A549 (cell line): ENCODE measurements at regions of chr3 and their contacts with region 1.

Region 1: DNA sequence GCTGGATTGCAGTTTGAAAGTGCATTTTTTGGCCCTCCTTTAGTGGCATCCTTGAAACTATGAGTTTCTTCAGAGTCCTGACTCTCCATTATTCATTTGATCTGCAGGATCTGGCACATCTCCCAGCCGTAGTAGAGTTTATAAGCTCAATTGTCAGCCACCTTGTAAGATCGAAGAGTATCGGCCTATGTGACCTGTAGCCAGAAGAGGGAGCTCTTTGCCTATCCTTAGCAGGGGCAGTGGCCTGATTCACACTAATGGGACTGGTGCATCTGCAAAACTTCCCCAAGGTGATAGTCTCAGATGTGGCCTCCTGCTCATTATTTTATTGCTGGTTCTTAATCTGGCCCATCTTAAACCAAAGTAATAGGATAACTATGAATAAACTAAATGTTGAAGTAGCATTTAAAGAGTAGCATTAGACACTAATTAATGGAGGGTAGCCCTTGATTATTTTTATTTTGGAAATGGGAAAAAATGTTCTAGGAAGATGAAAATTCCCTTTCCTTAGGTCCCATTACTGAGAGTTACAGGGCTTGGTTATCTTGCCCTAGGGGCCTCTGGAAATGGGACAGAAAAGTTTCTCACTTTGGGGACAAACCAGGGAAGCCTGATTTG is 21.2 kb downstream of the GCSAM start:
- DNase-seq: peak; percentile 52 to 72
- ATAC-seq: peak; percentile 86 to 96
- H3K4me3 ChIP-seq: no peak overlapping the region
- H3K27ac ChIP-seq: no peak overlapping the region
- H3K4me1 ChIP-seq: no peaks in the 10 kb centered on the region
- CTCF ChIP-seq: peak; percentile 60
- EP300 ChIP-seq: no peak
- POLR2A ChIP-seq: no peak
- RAD21 ChIP-seq: peak; percentile 58 to 78

Region 2: GRCh38 chr3:112032098-112032731 is 79.7 kb before region 1 on chr3:
- CTCF ChIA-PET with region 1: no interaction called
- POLR2A ChIA-PET with region 1: no interaction called
- DNase-seq: no peak
- ATAC-seq: no peak
- H3K4me3 ChIP-seq: no peak overlapping the region
- H3K27ac ChIP-seq: no peak overlapping the region
- H3K4me1 ChIP-seq: no peaks in the 10 kb centered on the region
- CTCF ChIP-seq: no peak
- EP300 ChIP-seq: no peak
- POLR2A ChIP-seq: no peak
- RAD21 ChIP-seq: no peak

Region 3: GRCh38 chr3:112097378-112097777 is 14.5 kb before region 1 on chr3:
- CTCF ChIA-PET with region 1: interaction called, 13 read pairs
- POLR2A ChIA-PET with region 1: no interaction called
- DNase-seq: peak; percentile 81 to 94
- ATAC-seq: peak; percentile 91 to 95
- H3K4me3 ChIP-seq: no peak overlapping the region
- H3K27ac ChIP-seq: peak overlapping the region; percentile 29 to 51; a peak in 3 of 6 replicates
- H3K4me1 ChIP-seq: peaks cover 47% of the 10 kb centered on the region
- CTCF ChIP-seq: no peak
- EP300 ChIP-seq: no peak; a peak in 1 of 5 replicates
- POLR2A ChIP-seq: no peak
- RAD21 ChIP-seq: 0 out of 5 replicates have a peak, but pooled peaks of 1 of the 2 experiments have one; percentile 2

Region 4: GRCh38 chr3:112126511-112126911 is 14.6 kb after region 1 on chr3:
- CTCF ChIA-PET with region 1: interaction called, 17 read pairs
- POLR2A ChIA-PET with region 1: no interaction called
- DNase-seq: no peak
- ATAC-seq: no peak
- H3K4me3 ChIP-seq: no peak overlapping the region
- H3K27ac ChIP-seq: no peak overlapping the region
- H3K4me1 ChIP-seq: peaks cover 4% of the 10 kb centered on the region; the same call in 1 of the 3 replicates
- CTCF ChIP-seq: no peak
- EP300 ChIP-seq: no peak
- POLR2A ChIP-seq: no peak
- RAD21 ChIP-seq: no peak